Calu3 (cell line): ENCODE measurements at regions of chr22 and their contacts with region 1.

Region 1: DNA sequence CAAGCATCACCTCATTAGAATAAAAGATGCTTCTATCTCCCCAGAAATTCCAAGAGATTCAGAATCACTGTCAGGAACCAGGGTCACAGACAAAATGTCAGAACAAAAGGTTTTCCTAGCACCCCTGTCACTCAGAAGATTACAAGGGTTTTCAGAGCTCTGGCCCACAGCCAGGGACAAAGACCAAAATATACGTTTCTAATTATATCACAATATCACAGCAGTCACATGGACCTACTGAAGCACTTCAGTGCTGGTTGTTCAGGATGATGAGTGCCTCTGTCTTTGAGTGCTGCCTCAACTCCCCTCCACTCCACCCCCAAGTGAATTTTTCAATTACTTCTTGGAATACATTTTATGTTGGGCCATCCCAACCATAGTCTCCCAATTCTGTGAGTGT is 21.9 kb upstream of the RTL6 start:
- DNase-seq: no peak
- H3K4me3 Mint-ChIP-seq: no peak overlapping the region
- H3K27ac Mint-ChIP-seq: no peak overlapping the region
- H3K4me1 Mint-ChIP-seq: no peaks in the 10 kb centered on the region
- H3K27me3 Mint-ChIP-seq: peaks cover 79% of the 10 kb centered on the region
- CTCF ChIP-seq: no peak

Region 2: DNA sequence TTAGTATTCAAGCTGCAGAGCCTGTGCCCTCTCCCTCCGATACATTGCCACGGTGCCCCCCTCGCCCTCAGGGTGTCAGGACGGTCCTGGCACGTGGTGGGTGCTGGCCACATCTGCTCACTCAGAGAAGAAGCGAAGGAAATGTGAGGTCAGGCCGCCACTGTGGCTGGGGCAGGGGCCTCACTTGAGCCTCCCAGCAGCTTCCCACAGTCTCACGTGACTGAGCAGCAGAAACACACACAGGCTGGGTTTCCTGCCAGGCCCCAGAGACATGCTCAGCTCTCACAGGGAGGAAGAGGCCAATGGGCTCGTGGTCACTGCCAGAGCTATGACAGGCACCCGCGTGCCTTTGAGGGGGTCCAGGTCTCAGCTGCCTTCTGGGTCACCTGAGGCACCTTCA is 144.3 kb after region 1 on chr22:
- CTCF ChIA-PET with region 1: no interaction called
- intact Hi-C with region 1: loop called (anchors 5 kb)
- DNase-seq: no peak
- H3K4me3 Mint-ChIP-seq: no peak overlapping the region
- H3K27ac Mint-ChIP-seq: no peak overlapping the region
- H3K4me1 Mint-ChIP-seq: no peaks in the 10 kb centered on the region
- H3K27me3 Mint-ChIP-seq: peaks cover 92% of the 10 kb centered on the region
- CTCF ChIP-seq: no peak

Region 3: GRCh38 chr22:44796972-44797725 is 277.3 kb after region 1 on chr22:
- CTCF ChIA-PET with region 1: no interaction called
- intact Hi-C with region 1: no loop called
- DNase-seq: no peak
- H3K4me3 Mint-ChIP-seq: no peak overlapping the region
- H3K27ac Mint-ChIP-seq: peak overlapping the region; percentile 33
- H3K4me1 Mint-ChIP-seq: no peaks in the 10 kb centered on the region
- H3K27me3 Mint-ChIP-seq: no peaks in the 10 kb centered on the region
- CTCF ChIP-seq: no peak